ENCODE measurements at regions of chr17 and their contacts with region 1.

Region 1: GRCh38 chr17:44044067-44044466 is 22.4 kb downstream of the LSM12 start:
- DNase-seq: no peak
- H3K4me3 ChIP-seq: no peak overlapping the region
- H3K4me3 Mint-ChIP-seq: no peak overlapping the region
- H3K27ac Mint-ChIP-seq: no peak overlapping the region
- H3K4me1 ChIP-seq: no peaks in the 10 kb centered on the region
- H3K4me1 Mint-ChIP-seq: peaks cover 6% of the 10 kb centered on the region
- H3K27me3 ChIP-seq: no peaks in the 10 kb centered on the region
- H3K27me3 Mint-ChIP-seq: no peaks in the 10 kb centered on the region
- CTCF ChIP-seq: no peak

Region 2: DNA sequence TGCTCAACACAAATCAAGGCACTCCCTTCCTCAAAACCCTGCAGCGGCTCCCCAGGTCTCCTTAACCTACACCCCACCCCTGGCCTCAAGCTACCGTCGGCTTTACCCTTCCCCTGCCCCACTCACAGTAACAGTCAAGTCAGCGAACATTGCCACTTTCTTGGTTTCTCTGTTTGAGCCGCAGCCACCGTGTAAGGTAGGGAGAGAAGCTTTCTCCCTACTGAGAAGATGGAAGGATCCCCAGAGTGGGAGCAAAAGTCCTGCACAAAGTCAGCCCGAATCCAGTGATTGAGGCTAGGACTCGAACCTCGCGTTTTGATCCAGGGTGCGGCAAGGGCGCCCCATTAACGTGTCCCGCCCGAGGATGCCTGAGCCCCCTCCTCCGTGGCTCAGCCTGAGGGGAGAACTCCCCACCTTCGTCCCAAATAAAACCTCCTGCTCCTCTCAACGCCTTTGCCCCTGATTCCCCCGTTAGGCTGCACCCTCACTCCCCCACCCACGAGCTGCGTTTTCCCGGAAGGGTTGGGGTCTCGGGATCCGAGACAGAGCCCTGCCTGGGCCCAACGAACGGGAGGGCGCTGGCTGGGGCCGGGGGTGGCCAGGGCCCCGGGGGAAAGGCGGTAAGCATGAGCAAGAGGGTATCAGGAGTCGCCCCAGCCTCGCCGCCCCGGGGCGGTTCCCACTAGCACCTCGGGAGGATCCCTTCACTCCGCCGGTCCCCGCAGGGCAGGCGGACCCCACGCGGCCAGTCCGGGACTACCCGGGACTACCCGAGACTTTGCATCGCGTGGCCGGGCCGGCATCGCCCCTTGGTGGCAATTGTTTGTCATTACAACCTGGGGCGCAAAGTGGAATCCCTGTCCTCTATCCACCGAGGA is 49.6 kb before region 1 on chr17:
- CTCF ChIA-PET with region 1: no interaction called
- POLR2A ChIA-PET with region 1: no interaction called
- intact Hi-C with region 1: no loop called
- DNase-seq: peak; percentile 73 to 85
- H3K4me3 ChIP-seq: peak overlapping the region; percentile 17; the same call in 1 of the 2 replicates
- H3K4me3 Mint-ChIP-seq: peak overlapping the region; percentile 61
- H3K27ac Mint-ChIP-seq: no peak overlapping the region
- H3K4me1 ChIP-seq: peaks cover 11% of the 10 kb centered on the region
- H3K4me1 Mint-ChIP-seq: no peaks in the 10 kb centered on the region
- H3K27me3 ChIP-seq: no peaks in the 10 kb centered on the region
- H3K27me3 Mint-ChIP-seq: peaks cover 3% of the 10 kb centered on the region
- CTCF ChIP-seq: peak; percentile 84 to 98

Region 3: DNA sequence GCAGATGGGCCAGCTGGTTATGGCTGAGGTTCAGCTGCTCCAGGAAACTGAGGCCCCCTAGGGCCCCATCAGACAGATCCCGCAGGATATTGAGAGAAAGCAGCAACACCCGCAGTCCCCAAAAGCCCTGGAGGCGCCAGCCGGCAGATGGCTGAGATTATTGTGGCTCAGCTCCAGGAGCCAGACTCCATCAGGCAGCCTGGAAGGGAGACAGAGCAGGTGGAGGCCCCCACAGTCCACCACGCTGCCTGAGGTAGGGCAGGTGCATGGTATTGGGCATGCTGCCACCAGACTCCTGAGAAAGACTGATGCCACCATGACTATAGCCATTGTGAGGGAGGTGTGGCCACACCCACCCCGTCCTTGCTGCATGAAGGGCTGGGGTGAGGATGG is 19.8 kb before region 1 on chr17:
- CTCF ChIA-PET with region 1: no interaction called
- POLR2A ChIA-PET with region 1: interaction called, 11 read pairs
- intact Hi-C with region 1: no loop called
- DNase-seq: no peak
- H3K4me3 ChIP-seq: no peak overlapping the region
- H3K4me3 Mint-ChIP-seq: no peak overlapping the region
- H3K27ac Mint-ChIP-seq: no peak overlapping the region
- H3K4me1 ChIP-seq: no peaks in the 10 kb centered on the region
- H3K4me1 Mint-ChIP-seq: no peaks in the 10 kb centered on the region
- H3K27me3 ChIP-seq: no peaks in the 10 kb centered on the region
- H3K27me3 Mint-ChIP-seq: no peaks in the 10 kb centered on the region
- CTCF ChIP-seq: no peak

Region 4: DNA sequence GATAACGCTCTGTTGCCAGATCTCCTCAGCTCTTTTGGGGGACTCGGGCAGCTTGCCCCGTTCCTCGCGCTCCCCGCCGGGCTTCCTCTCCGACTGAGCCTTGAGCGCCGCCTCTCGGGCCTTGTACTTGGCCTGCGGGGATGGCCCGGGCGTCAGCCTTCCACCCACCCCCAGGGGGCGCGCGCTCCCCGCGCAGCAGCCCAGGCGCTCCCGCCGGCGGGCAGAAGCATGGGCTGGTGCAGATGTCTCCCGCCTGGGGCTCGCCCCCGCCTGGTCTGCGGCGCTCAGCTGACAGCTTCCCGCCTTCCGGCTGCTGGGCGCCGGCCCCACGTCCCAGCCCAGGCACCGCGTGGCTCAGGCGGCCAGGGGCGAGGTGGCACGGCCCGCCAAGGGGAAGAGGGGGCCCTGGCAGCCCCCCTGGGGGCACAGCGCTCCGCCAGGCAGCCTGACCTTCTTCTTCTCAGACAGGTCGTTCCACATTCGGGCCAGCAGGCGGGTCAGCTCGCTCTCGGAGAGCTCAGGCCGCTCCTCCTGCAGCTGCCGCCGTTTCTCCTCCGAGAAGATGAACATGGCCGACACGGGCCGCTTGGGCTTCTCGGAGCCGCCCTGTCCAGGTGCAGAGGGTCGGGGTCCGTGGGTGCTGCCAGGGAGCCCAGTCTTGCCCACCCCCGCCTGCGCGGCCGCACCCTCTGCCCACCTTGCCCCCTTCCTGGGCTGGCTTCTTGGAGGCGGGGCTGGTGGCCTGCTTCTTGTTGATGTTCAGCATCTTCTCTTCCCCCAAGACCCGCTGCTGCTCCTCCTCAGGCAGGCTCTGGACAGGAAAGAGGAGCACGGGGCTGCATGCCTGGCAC is 166.5 kb after region 1 on chr17:
- CTCF ChIA-PET with region 1: no interaction called
- POLR2A ChIA-PET with region 1: no interaction called
- intact Hi-C with region 1: no loop called
- DNase-seq: peak in 1 of 2 experiments; percentile 62
- H3K4me3 ChIP-seq: no peak overlapping the region
- H3K4me3 Mint-ChIP-seq: no peak overlapping the region
- H3K27ac Mint-ChIP-seq: no peak overlapping the region
- H3K4me1 ChIP-seq: no peaks in the 10 kb centered on the region
- H3K4me1 Mint-ChIP-seq: no peaks in the 10 kb centered on the region
- H3K27me3 ChIP-seq: no peaks in the 10 kb centered on the region
- H3K27me3 Mint-ChIP-seq: no peaks in the 10 kb centered on the region
- CTCF ChIP-seq: peak; percentile 18 to 67

Measured in Caco-2 (cell line).